Vagina (tissue), 2 donors: ENCODE measurements at regions of chr14 and their contacts with region 1.

Region 1: GRCh38 chr14:66842911-66843512 is 335.1 kb downstream of the GPHN start:
- DNase-seq: no peak
- H3K4me3 ChIP-seq: no peak overlapping the region
- H3K27ac ChIP-seq: no peak overlapping the region
- H3K4me1 ChIP-seq: no peaks in the 10 kb centered on the region
- H3K27me3 ChIP-seq: no peaks in the 10 kb centered on the region
- CTCF ChIP-seq: no peak
- POLR2A ChIP-seq: no peak

Region 2: DNA sequence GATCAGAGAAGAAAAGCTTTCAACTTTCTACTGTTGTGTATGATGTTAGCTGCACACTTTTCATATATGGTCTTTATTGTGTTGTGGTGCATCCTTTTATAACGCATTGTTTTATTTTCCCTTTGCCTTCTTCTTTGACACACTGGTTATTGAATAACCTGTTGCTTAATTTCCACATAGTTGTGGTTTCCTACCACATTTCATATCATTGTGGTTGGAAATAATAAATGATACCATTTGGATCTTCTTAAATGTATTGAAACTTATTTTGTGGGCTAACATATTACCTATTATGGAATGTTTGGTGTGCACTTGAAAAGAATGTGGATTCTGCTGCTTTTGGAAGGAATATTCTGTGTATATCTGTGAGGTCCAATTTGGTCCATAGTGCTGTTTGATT is 270.2 kb before region 1 on chr14:
- intact Hi-C with region 1: loop called (anchors 5 kb)
- DNase-seq: no peak
- H3K4me3 ChIP-seq: no peak overlapping the region
- H3K27ac ChIP-seq: no peak overlapping the region
- H3K4me1 ChIP-seq: no peaks in the 10 kb centered on the region
- H3K27me3 ChIP-seq: no peaks in the 10 kb centered on the region
- CTCF ChIP-seq: no peak
- POLR2A ChIP-seq: no peak

Region 3: DNA sequence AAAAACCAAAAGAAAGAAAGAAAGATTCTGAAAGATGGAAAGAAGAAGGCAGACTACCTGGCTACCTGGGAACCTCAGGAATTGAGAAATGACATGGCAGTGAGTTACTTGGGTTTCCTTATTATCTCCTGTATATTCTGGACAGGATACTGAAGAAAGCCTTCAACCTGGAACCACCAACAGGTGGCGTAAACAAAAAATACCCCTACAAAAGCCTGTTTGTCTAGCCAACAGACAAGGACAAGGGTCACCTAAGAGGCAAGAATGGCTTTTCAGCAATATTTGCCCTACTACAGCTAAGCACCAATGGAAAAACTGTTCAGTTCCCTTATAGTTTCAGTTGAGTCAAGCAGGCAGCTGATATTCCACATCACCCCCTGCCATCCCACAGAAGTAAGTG is 60.2 kb before region 1 on chr14:
- intact Hi-C with region 1: no loop called
- DNase-seq: no peak
- H3K4me3 ChIP-seq: no peak overlapping the region
- H3K27ac ChIP-seq: no peak overlapping the region
- H3K4me1 ChIP-seq: no peaks in the 10 kb centered on the region
- H3K27me3 ChIP-seq: no peaks in the 10 kb centered on the region
- CTCF ChIP-seq: no peak
- POLR2A ChIP-seq: no peak